ENCODE measurements at regions of chr11 and their contacts with region 1.

Region 1: GRCh38 chr11:17528181-17528691 is 16.0 kb downstream of the USH1C start:
- DNase-seq: peak; percentile 82
- ATAC-seq: peak; percentile 95
- H3K4me3 Mint-ChIP-seq: no peak overlapping the region
- H3K27ac Mint-ChIP-seq: no peak overlapping the region
- H3K4me1 Mint-ChIP-seq: peaks cover 5% of the 10 kb centered on the region; the same call in 1 of the 2 replicates
- H3K27me3 Mint-ChIP-seq: no peaks in the 10 kb centered on the region; the same call in 1 of the 2 replicates
- CTCF ChIP-seq: peak; percentile 73

Region 2: GRCh38 chr11:17354601-17354991 is 173.6 kb before region 1 on chr11:
- CTCF ChIA-PET with region 1: interaction called, 41 read pairs
- POLR2A ChIA-PET with region 1: no interaction called
- DNase-seq: peak; percentile 67
- ATAC-seq: 0 out of 2 replicates have a peak, but pooled peaks have one; percentile 11
- H3K4me3 Mint-ChIP-seq: peak overlapping the region; percentile 82
- H3K27ac Mint-ChIP-seq: no peak overlapping the region
- H3K4me1 Mint-ChIP-seq: peaks cover 27% of the 10 kb centered on the region
- H3K27me3 Mint-ChIP-seq: peaks cover 60% of the 10 kb centered on the region
- CTCF ChIP-seq: peak; percentile 47

Region 3: GRCh38 chr11:17389211-17389956 is 138.9 kb before region 1 on chr11:
- CTCF ChIA-PET with region 1: interaction called, 203 read pairs
- POLR2A ChIA-PET with region 1: no interaction called
- DNase-seq: peak; percentile 84
- ATAC-seq: peak; percentile 69
- H3K4me3 Mint-ChIP-seq: peak overlapping the region; percentile 67
- H3K27ac Mint-ChIP-seq: no peak overlapping the region
- H3K4me1 Mint-ChIP-seq: peaks cover 6% of the 10 kb centered on the region
- H3K27me3 Mint-ChIP-seq: peaks cover 20% of the 10 kb centered on the region
- CTCF ChIP-seq: peak; percentile 77

Region 4: GRCh38 chr11:17473071-17473744 is 55.0 kb before region 1 on chr11:
- CTCF ChIA-PET with region 1: interaction called, 28 read pairs
- POLR2A ChIA-PET with region 1: no interaction called
- DNase-seq: peak; percentile 76
- ATAC-seq: peak; percentile 91
- H3K4me3 Mint-ChIP-seq: peak overlapping the region; percentile 11; the same call in 1 of the 2 replicates
- H3K27ac Mint-ChIP-seq: no peak overlapping the region
- H3K4me1 Mint-ChIP-seq: peaks cover 14% of the 10 kb centered on the region
- H3K27me3 Mint-ChIP-seq: peaks cover 47% of the 10 kb centered on the region
- CTCF ChIP-seq: peak; percentile 25; the same call in 1 of the 2 replicates

Region 5: DNA sequence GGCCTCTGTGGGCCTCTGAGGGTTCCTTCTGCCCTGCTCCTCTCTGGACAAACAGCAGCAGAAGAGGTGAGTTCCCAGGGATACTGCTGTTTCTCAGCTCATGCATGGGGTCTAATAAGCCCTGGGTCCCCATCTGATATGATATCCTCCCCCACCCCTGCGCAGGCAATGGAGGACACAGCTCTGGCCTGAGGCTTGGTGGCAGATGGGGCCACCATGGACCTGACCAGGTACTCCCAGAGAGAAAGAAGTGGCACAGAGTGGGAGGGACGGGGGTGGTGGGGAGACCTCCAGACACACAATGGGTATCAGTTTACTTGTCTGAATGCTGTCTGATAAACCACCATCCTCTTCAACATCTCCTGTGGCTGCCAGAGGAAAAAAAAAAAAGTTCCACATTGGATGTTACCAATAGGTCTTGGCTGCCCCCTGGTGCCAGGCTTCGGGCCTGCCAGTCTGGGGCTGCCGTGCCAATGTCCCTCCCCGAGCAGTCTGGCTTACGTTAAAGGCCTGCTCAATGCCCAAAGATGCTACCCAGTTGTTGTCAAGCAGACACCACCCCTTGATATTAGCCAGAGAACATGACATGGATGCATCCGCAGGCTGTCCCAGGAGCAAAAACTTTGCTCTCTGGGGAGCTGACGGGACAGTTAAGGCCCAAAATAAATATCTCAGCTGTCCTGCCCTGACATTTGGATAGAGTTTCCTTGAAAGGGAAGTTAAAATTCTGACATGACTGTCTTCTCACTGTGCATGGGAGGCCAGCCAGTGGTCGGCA is 23.7 kb before region 1 on chr11:
- CTCF ChIA-PET with region 1: interaction called, 120 read pairs
- POLR2A ChIA-PET with region 1: no interaction called
- DNase-seq: peak; percentile 84
- ATAC-seq: peak; percentile 86
- H3K4me3 Mint-ChIP-seq: no peak overlapping the region
- H3K27ac Mint-ChIP-seq: no peak overlapping the region
- H3K4me1 Mint-ChIP-seq: no peaks in the 10 kb centered on the region
- H3K27me3 Mint-ChIP-seq: peaks cover 2% of the 10 kb centered on the region; the same call in 1 of the 2 replicates
- CTCF ChIP-seq: peak; percentile 85

Region 6: GRCh38 chr11:17563248-17563647 is 35.0 kb after region 1 on chr11:
- CTCF ChIA-PET with region 1: interaction called, 25 read pairs
- POLR2A ChIA-PET with region 1: no interaction called
- DNase-seq: peak; percentile 25
- ATAC-seq: peak; percentile 92
- H3K4me3 Mint-ChIP-seq: no peak overlapping the region
- H3K27ac Mint-ChIP-seq: no peak overlapping the region
- H3K4me1 Mint-ChIP-seq: no peaks in the 10 kb centered on the region
- H3K27me3 Mint-ChIP-seq: no peaks in the 10 kb centered on the region
- CTCF ChIP-seq: no peak